OCI-LY7 (cell line): ENCODE measurements at regions of chr11 and their contacts with region 1.

Region 1: DNA sequence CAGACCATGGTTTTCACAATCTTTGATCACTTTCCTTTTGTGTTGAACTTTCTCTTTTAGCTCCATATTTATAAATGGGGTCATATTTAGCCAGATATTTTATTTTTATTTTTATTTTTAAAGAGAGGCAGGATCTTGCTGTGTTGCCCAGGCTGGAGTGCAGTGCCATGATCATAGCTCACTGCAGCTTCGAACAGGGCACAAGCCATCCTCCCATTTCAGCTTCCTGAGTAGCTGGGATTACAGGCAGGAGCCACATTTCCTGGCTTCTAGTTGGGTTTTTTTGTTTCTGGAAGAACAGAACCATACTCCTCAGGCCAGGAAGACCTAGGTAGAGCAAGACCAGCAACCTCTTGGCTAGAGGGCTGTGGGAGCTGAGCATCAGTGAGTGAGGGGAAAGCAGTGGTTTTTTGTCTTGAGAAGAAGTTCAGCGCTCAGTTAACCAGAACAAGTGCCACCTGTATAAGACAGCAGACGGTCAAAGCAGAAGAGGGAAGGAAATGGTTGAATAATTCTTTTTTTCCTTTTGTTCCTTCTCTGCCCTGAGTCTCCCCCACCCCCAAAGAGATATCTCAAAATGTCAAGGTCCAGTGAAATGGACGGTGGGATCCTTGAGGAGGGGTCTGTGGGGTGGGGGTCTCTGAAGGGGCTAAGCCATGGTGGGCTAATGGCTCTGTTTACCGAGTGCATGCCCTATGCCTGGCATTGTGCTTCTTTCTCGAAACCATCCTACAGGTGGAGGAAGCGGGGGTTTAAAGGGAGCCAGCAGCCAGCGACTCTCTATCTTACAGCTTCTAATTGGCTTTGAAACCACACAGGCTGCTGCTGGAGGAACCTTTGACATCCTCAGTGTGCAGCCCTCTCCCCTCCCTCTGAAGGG is 63.0 kb downstream of the PTPRJ start:
- DNase-seq: peak; percentile 91
- H3K4me3 ChIP-seq: peak overlapping the region; percentile 50
- H3K27ac ChIP-seq: peak overlapping the region; percentile 92
- H3K4me1 ChIP-seq: peaks cover 82% of the 10 kb centered on the region
- CTCF ChIP-seq: no peak

Region 2: GRCh38 chr11:47869546-47870393 is 173.6 kb before region 1 on chr11:
- CTCF ChIA-PET with region 1: no interaction called
- POLR2A ChIA-PET with region 1: no interaction called
- intact Hi-C with region 1: no loop called
- DNase-seq: no peak
- H3K4me3 ChIP-seq: no peak overlapping the region
- H3K27ac ChIP-seq: no peak overlapping the region
- H3K4me1 ChIP-seq: peaks cover 5% of the 10 kb centered on the region
- CTCF ChIP-seq: no peak

Region 3: GRCh38 chr11:48028914-48029680 is 14.3 kb before region 1 on chr11:
- CTCF ChIA-PET with region 1: interaction called, 6 read pairs
- POLR2A ChIA-PET with region 1: interaction called, 36 read pairs
- intact Hi-C with region 1: loop called (anchors 1 kb)
- DNase-seq: peak; percentile 58
- H3K4me3 ChIP-seq: peak overlapping the region; percentile 33
- H3K27ac ChIP-seq: peak overlapping the region; percentile 45
- H3K4me1 ChIP-seq: peaks cover 88% of the 10 kb centered on the region
- CTCF ChIP-seq: no peak

Region 4: DNA sequence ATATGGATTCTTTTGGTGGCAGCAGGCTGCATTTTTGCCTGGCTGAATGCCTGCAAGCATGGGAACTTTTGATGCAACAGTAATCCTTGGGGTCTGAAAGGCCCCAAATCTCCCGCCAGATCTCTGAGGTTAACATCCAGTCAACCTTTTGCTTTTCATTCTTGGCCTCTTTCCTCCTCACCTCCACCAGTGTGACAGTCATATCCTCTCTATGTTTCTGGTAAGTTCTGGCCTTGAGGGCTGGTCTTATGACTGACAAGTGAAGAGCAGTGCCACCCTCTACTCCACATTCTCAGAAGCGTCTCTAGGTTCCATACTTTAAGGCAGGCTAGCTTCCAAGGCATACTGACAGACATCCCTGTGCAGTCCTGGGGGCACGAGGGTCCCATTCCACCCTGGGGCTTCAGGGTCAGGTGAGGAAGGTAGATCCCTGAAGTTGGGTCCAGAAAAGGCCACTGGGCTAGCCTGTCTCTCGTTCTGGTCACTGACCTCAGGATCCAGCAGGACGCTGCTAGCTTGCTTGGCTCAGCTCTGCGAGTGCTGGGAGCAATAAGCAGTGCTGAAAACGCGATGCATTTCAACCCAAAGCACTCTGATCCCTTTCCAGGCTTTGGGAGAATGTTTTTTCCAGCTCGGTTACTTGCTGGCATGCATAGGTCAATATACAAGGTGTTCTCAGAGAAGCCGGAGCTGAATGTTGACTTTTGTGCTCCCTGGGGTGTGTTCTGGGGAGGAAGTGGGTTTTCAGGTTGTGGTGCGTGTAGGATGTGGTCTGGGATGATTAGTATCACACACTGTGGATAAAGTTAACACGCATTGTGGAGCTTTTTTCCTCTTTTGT is 12.2 kb after region 1 on chr11:
- CTCF ChIA-PET with region 1: interaction called, 3 read pairs
- POLR2A ChIA-PET with region 1: interaction called, 21 read pairs
- intact Hi-C with region 1: no loop called
- DNase-seq: peak; percentile 71
- H3K4me3 ChIP-seq: peak overlapping the region; percentile 7
- H3K27ac ChIP-seq: no peak overlapping the region
- H3K4me1 ChIP-seq: peaks cover 63% of the 10 kb centered on the region
- CTCF ChIP-seq: no peak

Region 5: DNA sequence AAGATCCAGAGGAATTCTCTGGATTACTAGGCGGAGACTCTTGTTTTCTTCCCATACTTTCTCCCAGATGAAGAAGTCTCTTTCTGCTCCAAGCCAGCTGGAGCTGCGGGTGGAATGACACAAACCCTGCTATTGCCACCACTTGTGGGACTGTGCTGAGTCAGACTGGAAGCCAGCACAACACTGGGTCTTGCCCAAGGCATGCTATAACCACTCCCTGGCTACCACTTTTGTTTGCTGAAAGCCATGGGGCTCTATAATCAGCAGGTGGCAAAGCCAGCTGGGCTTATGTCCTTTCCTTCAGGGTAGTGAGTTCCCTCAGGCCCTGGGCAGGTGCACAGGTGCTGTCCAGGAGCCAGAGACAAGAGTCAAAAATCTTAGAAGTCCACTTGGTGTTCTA is 271.8 kb after region 1 on chr11:
- CTCF ChIA-PET with region 1: no interaction called
- POLR2A ChIA-PET with region 1: no interaction called
- intact Hi-C with region 1: no loop called
- DNase-seq: no peak
- H3K4me3 ChIP-seq: no peak overlapping the region
- H3K27ac ChIP-seq: no peak overlapping the region
- H3K4me1 ChIP-seq: no peaks in the 10 kb centered on the region
- CTCF ChIP-seq: no peak